Psoas muscle (tissue), 8 donors: ENCODE measurements at regions of chr10 and their contacts with region 1.

Region 1: DNA sequence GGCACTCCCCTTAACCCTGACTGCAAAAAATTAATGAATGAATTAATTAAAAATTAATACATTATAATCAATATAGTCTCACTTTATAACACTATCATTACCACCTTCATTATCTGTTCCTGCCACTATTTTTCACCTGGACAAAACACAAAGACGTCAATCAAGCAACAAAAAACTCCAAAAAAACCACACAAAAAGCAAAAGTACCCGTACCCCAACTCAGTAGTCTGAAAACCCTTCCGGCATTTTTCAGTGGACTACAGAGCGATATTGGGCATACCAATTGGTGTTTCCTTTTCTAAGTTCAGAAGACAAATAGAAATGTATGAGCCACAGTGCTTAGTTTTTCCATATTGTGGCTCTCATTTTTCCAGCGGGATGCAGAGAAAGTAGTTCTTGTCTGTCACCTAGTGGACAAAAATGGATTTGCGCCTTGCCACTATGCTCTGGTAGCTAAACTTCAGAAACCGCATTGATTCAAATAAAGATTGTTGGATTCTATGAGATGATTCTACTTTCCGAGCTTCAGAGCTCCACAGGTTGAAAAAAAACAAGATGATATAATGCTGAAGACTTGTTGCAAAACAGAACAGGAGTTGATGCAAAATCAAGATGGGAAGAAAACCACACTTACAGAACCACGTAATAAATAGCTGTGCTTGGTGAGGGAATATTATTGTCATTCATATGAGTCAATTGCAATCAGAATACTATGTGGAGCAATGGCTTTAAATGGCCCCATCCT is 50.6 kb upstream of the ITGB1 start:
- DNase-seq: no peak
- ATAC-seq: peak in 3 of 4 donors; percentile 46 to 72 (median 50)
- H3K4me3 ChIP-seq: no peak overlapping the region
- H3K27ac ChIP-seq: no peak overlapping the region
- H3K4me1 ChIP-seq: peaks cover 10% of the 10 kb centered on the region
- H3K27me3 ChIP-seq: no peaks in the 10 kb centered on the region
- CTCF ChIP-seq: peak; percentile 99

Region 2: GRCh38 chr10:32795598-32796183 is 213.0 kb before region 1 on chr10:
- intact Hi-C with region 1: loop called (anchors 1 to 2 kb)
- DNase-seq: no peak
- ATAC-seq: peak in 2 of 4 donors; percentile 57 to 71
- H3K4me3 ChIP-seq: no peak overlapping the region
- H3K27ac ChIP-seq: no peak overlapping the region
- H3K4me1 ChIP-seq: no peaks in the 10 kb centered on the region
- H3K27me3 ChIP-seq: no peaks in the 10 kb centered on the region
- CTCF ChIP-seq: peak; percentile 65

Region 3: DNA sequence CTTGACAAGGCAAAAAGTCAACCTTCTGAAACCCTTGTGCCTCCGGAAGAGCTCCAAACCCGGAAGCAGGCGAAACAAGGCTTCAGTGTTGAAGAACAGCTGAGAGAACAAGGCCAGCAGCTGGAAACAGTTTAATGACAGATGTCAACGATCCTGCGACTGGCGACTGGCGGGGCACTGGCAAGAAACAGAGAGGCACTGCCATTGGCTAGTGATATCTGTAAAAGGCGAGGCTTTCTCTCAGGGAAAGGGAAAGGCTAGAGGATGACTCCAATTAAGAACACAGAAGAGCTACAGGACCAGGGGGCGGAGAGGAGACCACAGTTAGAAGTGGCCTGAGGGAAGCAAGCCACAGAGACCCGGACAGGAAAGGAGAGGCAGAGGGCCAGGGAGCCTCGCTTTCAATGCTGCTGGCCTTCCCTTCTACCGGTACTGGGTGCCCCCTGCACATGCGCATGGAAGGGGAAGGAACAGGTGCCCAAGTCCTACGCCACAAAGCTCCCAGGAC is 70.1 kb before region 1 on chr10:
- intact Hi-C with region 1: loop called (anchors 5 kb)
- DNase-seq: peak in 1 of 2 donors; percentile 61
- ATAC-seq: peak; percentile 67 to 82 (median 76)
- H3K4me3 ChIP-seq: peak overlapping the region; percentile 47
- H3K27ac ChIP-seq: peak overlapping the region; percentile 83
- H3K4me1 ChIP-seq: peaks cover 72% of the 10 kb centered on the region
- H3K27me3 ChIP-seq: no peaks in the 10 kb centered on the region
- CTCF ChIP-seq: no peak

Region 4: GRCh38 chr10:32958085-32959005 is 50.3 kb before region 1 on chr10 and contains the start of gene ITGB1:
- intact Hi-C with region 1: loop called in 1 of 2 experiments (anchors 5 kb)
- DNase-seq: peak; percentile 98 to 99
- ATAC-seq: peak; percentile 94 to 96 (median 96)
- H3K4me3 ChIP-seq: peak within 1 kb of the TSS; percentile 95
- H3K27ac ChIP-seq: peak within 1 kb of the TSS; percentile 98
- H3K4me1 ChIP-seq: peaks cover 67% of the 10 kb centered on the region
- H3K27me3 ChIP-seq: no peaks in the 10 kb centered on the region
- CTCF ChIP-seq: no peak
- total RNA-seq, gene ITGB1: 222 to 485 (median 241) TPM

Region 5: DNA sequence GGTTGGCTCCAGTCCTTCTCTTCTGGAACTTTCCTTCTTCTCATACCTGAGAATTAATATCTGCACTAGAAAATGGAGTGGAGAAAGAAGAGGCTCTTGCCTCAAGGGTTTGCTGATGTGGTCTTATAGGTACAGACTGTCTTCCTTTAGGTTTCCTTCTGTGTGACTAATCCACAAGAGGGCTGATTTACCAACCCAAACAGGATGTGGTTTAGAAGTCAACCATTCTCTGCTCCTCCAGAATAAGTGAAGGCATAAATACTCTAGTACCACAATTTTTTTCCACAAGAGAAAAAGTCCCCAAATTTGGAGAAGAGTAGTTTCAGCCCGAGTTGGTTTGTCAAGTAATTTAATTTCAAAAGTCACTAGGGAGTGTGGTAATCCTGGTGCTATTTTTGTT is 240.0 kb after region 1 on chr10:
- intact Hi-C with region 1: no loop called
- DNase-seq: no peak
- ATAC-seq: peak in 1 of 4 donors; percentile 42
- H3K4me3 ChIP-seq: no peak overlapping the region
- H3K27ac ChIP-seq: peak overlapping the region; percentile 69
- H3K4me1 ChIP-seq: peaks cover 22% of the 10 kb centered on the region
- H3K27me3 ChIP-seq: no peaks in the 10 kb centered on the region
- CTCF ChIP-seq: no peak